ENCODE measurements at regions of chr22 and their contacts with region 1.

Region 1: DNA sequence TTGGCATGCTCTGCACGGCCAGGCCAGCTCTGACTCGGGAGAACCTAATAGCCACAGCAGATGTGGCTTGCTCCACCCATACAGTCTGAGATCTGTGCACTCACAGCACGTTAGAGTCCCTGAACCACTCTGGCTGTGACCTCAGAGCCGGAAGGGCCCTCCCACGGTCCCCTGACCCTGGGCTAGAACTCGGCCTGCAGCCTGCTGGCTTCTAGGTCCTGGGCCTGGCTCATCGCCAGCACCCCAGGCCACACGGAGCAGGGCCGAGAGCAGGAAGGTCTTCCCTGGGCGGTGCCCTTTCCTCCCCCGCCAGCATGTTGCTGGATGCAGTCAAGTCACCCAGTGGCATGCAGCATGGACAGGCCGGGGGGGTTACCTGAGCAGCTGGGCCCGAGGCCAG is 35.3 kb upstream of the TTLL12 start:
- DNase-seq: no peak
- ATAC-seq: peak; percentile 65

Region 2: DNA sequence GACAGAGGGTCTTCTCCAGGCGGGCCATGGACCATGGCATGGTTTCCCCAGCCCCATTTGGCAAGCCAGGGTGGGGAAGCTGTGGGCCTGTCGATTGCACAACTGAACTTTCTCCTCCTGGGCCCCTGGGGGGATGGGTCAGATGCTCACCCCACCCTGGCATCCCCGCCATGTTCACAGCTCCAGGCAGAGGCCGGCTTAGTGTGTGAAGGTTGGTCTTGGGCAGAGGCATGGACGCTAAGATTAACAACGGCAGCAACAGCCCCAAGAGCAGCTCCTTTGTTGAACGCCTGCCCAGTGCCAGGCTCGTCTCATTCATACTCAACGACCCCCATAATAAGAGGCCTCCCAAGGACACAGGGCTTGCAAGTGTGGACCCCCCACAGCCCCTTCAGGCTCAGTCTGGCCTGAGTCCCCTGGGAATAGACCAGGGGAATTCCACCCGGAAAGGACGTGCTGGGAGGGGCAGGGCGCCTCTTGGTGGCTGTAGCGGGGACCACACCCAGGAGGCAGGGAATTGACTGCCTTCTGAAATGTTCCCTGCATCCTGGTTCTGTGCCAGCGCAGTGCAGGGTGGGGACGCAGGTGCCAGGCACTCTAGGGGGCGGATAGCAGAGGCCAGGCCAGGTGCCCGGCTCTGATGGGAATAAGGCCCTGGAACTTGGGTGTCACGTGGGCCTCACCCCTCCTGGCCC is 62.6 kb before region 1 on chr22:
- intact Hi-C with region 1: no loop called
- DNase-seq: no peak
- ATAC-seq: peak; percentile 1

Region 3: GRCh38 chr22:43187171-43188099 is 34.8 kb before region 1 on chr22:
- intact Hi-C with region 1: loop called (anchors 1 kb)
- DNase-seq: peak; percentile 99
- ATAC-seq: peak; percentile 94